Kidney (tissue), 22 donors: ENCODE measurements at regions of chr19 and their contacts with region 1.

Region 1: DNA sequence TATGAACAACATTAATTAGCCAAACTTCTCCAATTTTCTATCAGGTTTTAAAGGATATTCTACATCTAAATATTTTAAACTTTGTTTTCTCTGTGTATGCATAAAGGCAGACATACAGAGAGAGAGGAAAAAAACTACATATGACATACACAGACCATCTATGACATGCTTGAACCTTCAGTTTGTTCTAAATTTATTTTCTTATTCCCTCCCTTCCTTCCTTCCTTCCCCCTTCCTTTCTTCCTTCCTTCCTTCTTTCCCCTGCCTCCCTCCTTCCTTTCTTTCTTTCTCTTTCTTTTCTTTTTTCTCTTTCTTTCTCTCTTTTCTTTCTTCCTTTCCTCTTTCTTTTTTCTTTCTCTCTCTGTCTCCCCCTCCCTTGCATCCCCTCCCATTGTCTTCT is 35.8 kb upstream of the CD70 start:
- DNase-seq: no peak
- H3K4me3 ChIP-seq: no peak overlapping the region
- H3K27ac ChIP-seq: no peak overlapping the region
- H3K4me1 ChIP-seq: no peaks in the 10 kb centered on the region
- H3K27me3 ChIP-seq: no peaks in the 10 kb centered on the region
- CTCF ChIP-seq: no peak

Region 2: DNA sequence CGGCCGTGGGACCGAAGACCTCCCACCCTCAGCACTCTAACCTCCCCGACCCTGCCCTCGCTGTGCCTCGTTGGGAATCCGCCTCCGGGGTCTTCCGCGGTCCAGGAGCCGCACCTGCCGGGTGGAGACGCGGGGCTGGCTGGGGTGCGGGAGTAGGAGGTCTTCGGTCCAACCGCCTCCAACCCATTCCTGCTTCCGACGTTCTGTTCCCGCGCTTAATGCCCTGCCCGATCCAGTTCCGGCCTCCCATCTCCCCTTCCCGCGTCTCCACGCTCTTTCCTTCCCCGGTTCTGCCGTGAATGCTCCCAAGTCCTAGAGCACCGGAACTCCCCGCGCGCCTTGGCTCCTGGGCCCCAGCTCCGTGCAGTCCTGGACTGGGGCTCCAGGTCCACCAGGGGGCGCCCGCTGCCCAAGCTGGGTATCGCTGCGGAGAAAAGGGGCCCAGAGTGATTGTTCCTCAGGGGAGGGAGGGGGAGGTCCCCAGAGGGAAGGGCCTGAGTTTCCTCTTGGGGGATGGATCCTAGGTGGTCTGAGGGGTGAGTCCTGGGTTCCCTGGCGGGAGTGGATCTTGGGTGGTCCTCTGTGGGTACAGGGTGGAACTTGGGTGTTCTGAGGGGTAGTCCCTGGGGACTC is 110.0 kb before region 1 on chr19:
- intact Hi-C with region 1: loop called (anchors 10 kb)
- DNase-seq: peak; percentile 90 to 95 (median 93)
- H3K4me3 ChIP-seq: peak overlapping the region; percentile 65 to 80 (median 77)
- H3K27ac ChIP-seq: peak overlapping the region; percentile 51 to 56
- H3K4me1 ChIP-seq: peaks cover 0 to 2% (median 0%) of the 10 kb centered on the region in 3 donors
- H3K27me3 ChIP-seq: no peaks in the 10 kb centered on the region
- CTCF ChIP-seq: peak; percentile 98

Region 3: GRCh38 chr19:6862673-6863078 is 235.9 kb after region 1 on chr19:
- intact Hi-C with region 1: loop called (anchors 10 kb)
- DNase-seq: peak; percentile 86 to 92 (median 88)
- H3K4me3 ChIP-seq: no peak overlapping the region
- H3K27ac ChIP-seq: no peak overlapping the region
- H3K4me1 ChIP-seq: no peaks in the 10 kb centered on the region
- H3K27me3 ChIP-seq: no peaks in the 10 kb centered on the region
- CTCF ChIP-seq: peak; percentile 83